WTC11 (cell line): ENCODE measurements at regions of chr11 and their contacts with region 1.

Region 1: GRCh38 chr11:61516675-61517572 is 8.4 kb downstream of the LRRC10B start:
- DNase-seq: peak; percentile 85
- ATAC-seq: peak; percentile 43
- H3K4me3 Mint-ChIP-seq: peak overlapping the region; percentile 45
- H3K27ac Mint-ChIP-seq: peak overlapping the region; percentile 57; the same call in 1 of the 2 replicates
- H3K4me1 Mint-ChIP-seq: peaks cover 48% of the 10 kb centered on the region
- H3K27me3 Mint-ChIP-seq: peaks cover 9% of the 10 kb centered on the region; the same call in 1 of the 2 replicates
- CTCF ChIP-seq: peak; percentile 100

Region 2: DNA sequence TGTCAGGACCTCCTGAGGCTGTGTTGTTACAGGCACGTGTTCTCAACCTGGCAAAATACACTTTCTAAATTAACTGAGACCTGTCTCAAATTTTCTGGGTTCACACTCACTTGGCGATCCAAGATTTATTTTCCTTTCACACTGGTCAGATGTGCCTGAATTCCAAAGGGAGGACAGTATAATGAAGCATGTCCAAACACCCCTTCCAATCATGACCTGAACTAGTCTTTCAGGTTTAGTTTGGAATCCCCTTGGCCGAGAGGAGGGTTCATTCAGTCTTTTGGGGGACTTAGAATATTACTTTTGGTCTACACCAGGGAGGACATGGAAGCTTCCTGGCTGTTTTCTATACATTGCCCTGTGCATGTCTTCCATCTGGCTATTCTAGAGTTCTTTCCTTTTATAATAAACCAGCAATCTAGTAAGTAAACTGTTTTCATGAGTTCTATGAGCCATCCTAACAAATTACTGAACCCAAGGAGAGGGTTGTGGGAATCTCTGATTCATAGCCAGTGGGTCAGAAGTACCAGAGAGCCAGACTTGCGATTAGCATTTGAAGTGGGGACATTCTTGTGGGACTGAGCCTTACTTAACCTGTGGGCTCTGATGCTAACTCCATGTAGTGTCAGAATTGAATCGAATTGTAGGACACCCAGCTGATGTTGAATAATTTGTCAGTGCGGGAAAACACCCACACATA is 139.3 kb before region 1 on chr11:
- CTCF ChIA-PET with region 1: no interaction called
- POLR2A ChIA-PET with region 1: no interaction called
- DNase-seq: no peak
- ATAC-seq: no peak
- H3K4me3 Mint-ChIP-seq: no peak overlapping the region
- H3K27ac Mint-ChIP-seq: no peak overlapping the region; the same call in 1 of the 2 replicates
- H3K4me1 Mint-ChIP-seq: 0 out of 2 replicates have a peak, but pooled peaks cover 3% of the 10 kb centered on the region
- H3K27me3 Mint-ChIP-seq: no peaks in the 10 kb centered on the region
- CTCF ChIP-seq: no peak

Region 3: GRCh38 chr11:61429691-61430582 is 87.0 kb before region 1 on chr11 and contains the starts of genes CPSF7 and SDHAF2:
- CTCF ChIA-PET with region 1: interaction called, 19 read pairs
- POLR2A ChIA-PET with region 1: no interaction called
- DNase-seq: peak; percentile 97
- ATAC-seq: peak; percentile 86
- H3K4me3 Mint-ChIP-seq: peak within 1 kb of the TSS; percentile 100
- H3K27ac Mint-ChIP-seq: peak within 1 kb of the TSS; percentile 100
- H3K4me1 Mint-ChIP-seq: peaks cover 20% of the 10 kb centered on the region
- H3K27me3 Mint-ChIP-seq: no peaks in the 10 kb centered on the region
- CTCF ChIP-seq: no peak
- total RNA-seq, gene CPSF7: 86.0 to 90.7 TPM (median 88.3 TPM) in 3 replicates
- total RNA-seq, gene SDHAF2: 36.2 to 36.8 TPM (median 36.5 TPM) in 3 replicates

Region 4: DNA sequence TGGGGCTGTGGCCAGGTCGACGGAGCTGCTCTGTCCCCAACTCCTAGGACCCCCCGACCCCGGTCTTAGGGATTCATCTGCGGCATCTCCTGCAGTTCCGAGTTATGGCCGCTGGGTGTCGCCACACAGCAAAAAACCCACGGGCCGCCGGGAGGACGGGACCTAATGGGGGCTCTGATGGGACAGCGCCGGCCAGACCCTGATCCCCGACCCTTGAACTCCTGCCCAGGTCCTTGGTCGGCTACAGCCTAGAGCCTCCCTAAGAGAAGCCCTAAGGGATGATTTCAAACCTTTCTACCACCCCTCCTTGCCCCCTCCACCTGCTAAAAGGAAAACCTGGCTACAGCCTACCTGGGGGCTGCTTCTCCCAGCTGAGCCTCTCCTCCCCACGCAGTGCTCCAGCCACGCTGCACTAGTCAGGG is 39.2 kb before region 1 on chr11:
- CTCF ChIA-PET with region 1: interaction called, 552 read pairs
- POLR2A ChIA-PET with region 1: interaction called, 4 read pairs
- DNase-seq: peak; percentile 86
- ATAC-seq: peak; percentile 43
- H3K4me3 Mint-ChIP-seq: no peak overlapping the region
- H3K27ac Mint-ChIP-seq: no peak overlapping the region
- H3K4me1 Mint-ChIP-seq: peaks cover 29% of the 10 kb centered on the region
- H3K27me3 Mint-ChIP-seq: peaks cover 3% of the 10 kb centered on the region; the same call in 1 of the 2 replicates
- CTCF ChIP-seq: peak; percentile 95

Region 5: DNA sequence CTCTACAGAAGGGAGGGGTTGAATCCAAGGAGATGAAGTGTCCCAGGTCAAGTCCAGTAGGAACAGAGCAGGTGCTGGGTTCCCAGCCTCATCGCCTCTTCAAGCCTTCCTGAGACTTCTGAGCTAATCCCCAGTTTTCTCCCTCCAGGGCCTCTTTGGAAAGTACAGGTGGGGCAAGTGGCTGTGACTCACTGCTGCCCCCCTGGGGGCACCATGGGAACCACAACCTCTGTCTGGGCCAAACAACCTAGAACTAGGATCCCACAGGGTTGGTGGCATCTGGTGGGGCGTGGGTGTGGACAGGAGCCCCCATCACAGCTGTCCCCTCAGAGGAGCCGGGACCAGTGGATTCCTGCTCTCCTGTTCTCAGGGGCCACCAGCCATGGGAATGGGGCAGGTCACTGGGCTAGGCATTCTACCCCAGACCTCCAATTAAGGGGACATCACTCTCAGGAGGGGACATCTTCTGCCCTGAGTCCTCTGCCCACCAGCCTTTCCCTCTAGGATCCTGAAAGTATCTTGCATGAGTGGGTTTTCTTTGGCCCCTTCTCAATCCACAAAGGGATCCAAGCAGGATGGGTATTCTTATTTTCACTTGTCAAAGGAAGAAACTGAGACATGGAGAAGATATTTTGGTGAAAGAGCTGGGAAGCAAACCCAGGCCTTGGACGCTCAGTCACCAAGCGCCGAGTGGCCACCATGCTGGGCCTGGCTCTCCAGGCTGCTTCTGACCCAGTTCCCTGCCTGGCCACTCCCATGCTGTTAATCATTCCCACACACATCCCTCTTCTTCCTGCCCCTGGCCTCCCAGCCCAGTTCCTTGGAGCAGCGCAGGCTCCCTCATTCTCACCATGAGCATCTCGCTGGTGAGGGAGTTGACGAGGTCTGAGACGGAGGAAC is 15.5 kb after region 1 on chr11:
- CTCF ChIA-PET with region 1: interaction called, 241 read pairs
- POLR2A ChIA-PET with region 1: interaction called, 4 read pairs
- DNase-seq: peak; percentile 77
- ATAC-seq: peak; percentile 85
- H3K4me3 Mint-ChIP-seq: no peak overlapping the region
- H3K27ac Mint-ChIP-seq: no peak overlapping the region
- H3K4me1 Mint-ChIP-seq: peaks cover 10% of the 10 kb centered on the region
- H3K27me3 Mint-ChIP-seq: no peaks in the 10 kb centered on the region
- CTCF ChIP-seq: peak; percentile 98

Region 6: DNA sequence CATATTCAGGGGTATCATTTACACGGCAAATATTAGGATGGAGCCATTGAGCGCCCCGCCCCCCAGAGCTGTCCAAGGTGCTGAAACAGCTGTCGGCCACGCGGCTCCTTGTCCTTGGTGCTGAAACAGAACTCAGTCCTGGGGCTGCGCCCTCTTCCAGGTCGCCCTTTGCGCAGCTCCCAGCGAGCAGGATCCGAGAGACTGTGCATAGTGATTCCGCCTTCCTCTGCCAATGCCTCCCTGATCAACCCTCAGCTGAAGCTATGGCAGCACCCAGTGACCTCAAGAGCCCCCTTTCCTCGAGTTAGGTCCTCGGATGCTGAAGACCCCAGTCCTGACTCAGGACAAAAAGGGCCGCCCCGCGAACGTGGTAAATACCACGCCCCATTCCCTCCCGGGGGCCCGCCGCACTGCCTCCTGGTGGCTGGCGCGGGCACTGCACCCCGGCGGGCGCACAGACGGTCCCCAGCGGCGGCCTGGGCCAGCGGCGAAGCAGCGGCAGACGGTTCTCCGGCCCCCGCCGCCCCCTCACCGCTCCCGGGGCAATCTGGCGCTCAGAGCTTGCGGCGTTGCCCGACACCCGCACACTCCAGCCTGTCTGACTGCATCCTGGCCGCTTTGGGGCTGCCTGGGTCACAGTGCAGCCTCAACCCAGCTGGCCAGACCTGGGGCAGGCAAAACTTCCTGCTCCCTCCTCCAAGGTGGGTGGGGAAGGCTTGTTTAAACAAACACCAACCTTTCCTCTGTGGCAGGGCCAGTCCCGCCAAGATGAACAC is 50.5 kb after region 1 on chr11:
- CTCF ChIA-PET with region 1: interaction called, 44 read pairs
- POLR2A ChIA-PET with region 1: no interaction called
- DNase-seq: peak; percentile 90
- ATAC-seq: peak; percentile 86
- H3K4me3 Mint-ChIP-seq: peak overlapping the region; percentile 59
- H3K27ac Mint-ChIP-seq: no peak overlapping the region
- H3K4me1 Mint-ChIP-seq: peaks cover 28% of the 10 kb centered on the region
- H3K27me3 Mint-ChIP-seq: peaks cover 19% of the 10 kb centered on the region
- CTCF ChIP-seq: peak; percentile 99

Region 7: GRCh38 chr11:61587521-61588453 is 70.9 kb after region 1 on chr11:
- CTCF ChIA-PET with region 1: interaction called, 25 read pairs
- POLR2A ChIA-PET with region 1: no interaction called
- DNase-seq: peak; percentile 96
- ATAC-seq: peak; percentile 80
- H3K4me3 Mint-ChIP-seq: peak overlapping the region; percentile 74
- H3K27ac Mint-ChIP-seq: no peak overlapping the region
- H3K4me1 Mint-ChIP-seq: peaks cover 34% of the 10 kb centered on the region
- H3K27me3 Mint-ChIP-seq: peaks cover 59% of the 10 kb centered on the region
- CTCF ChIP-seq: no peak

Region 8: DNA sequence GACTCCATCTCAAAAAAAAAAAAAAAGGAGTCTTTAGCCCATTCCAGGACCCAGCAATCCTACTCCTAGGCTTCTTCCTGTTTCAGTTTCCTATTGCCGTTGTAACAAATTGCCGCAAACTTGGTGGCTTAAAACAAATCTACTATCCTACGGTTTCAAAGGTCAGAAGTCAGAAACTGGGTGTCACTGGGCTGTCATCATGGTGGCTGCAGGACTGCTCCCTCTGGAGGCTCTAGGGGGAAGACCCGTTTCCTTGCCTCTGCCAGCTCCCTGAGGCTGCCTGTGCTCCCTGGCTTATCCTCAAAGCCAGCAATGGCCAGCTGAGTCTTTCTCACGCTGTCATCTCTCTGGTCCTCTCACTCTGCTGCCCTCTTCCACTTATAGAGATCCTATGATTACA is 154.6 kb after region 1 on chr11:
- CTCF ChIA-PET with region 1: interaction called, 11 read pairs
- POLR2A ChIA-PET with region 1: no interaction called
- DNase-seq: peak; percentile 61
- ATAC-seq: peak; percentile 91
- H3K4me3 Mint-ChIP-seq: no peak overlapping the region
- H3K27ac Mint-ChIP-seq: no peak overlapping the region
- H3K4me1 Mint-ChIP-seq: peaks cover 14% of the 10 kb centered on the region
- H3K27me3 Mint-ChIP-seq: no peaks in the 10 kb centered on the region; the same call in 1 of the 2 replicates
- CTCF ChIP-seq: no peak